Activated T-helper 2 cell treated with anti-CD3 and anti-CD28 coated beads, Interferon-gamma antibody, Interleukin-2, Interleukin-4, amounts not matched to agents 10 μg/mL and 5 μg/mL and 100 μg/mL, durations not matched to agents 14 hours and 24 hours and 36 hours (primary cell): ENCODE measurements at regions of chr3 and their contacts with region 1.

Region 1: DNA sequence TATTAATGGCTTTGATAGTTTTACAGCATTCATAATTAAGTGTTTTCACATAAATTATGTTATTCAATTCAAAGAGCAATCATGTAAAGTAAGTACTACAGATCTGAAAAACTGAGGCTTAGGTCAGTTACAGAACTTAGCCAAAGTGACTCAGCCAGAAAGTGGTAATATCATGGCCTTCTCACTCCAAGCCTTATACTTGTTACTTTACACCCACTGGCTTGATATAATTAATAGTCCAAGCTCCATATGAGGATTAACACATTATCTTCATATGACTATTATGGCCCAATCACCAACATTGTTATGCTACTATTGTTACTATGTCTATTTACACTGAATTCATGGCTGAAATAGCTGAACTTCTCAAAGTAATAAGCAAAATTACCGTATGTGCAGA is 50.7 kb downstream of the TIGIT start:
- DNase-seq: no peak
- H3K4me3 Mint-ChIP-seq: no peak overlapping the region
- H3K27ac Mint-ChIP-seq: no peak overlapping the region
- H3K4me1 Mint-ChIP-seq: peaks cover 12% of the 10 kb centered on the region
- H3K27me3 Mint-ChIP-seq: no peaks in the 10 kb centered on the region

Region 2: DNA sequence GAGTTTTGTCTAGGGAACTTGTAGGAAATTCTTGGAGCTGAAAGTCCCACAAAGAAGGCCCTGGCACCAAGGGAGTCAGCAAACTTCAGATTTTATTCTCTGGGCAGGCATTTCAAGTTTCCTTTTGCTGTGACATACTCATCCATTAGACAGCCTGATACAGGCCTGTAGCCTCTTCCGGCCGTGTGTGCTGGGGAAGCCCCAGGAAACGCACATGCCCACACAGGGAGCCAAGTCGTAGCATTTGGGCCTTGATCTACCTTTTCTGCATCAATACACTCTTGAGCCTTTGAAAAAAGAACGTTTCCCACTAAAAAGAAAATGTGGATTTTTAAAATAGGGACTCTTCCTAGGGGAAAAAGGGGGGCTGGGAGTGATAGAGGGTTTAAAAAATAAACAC is 35.7 kb before region 1 on chr3:
- intact Hi-C with region 1: loop called (anchors 5 kb)
- DNase-seq: no peak
- H3K4me3 Mint-ChIP-seq: no peak overlapping the region
- H3K27ac Mint-ChIP-seq: peak overlapping the region; percentile 93
- H3K4me1 Mint-ChIP-seq: peaks cover 43% of the 10 kb centered on the region
- H3K27me3 Mint-ChIP-seq: no peaks in the 10 kb centered on the region